ENCODE measurements at regions of chr16 and their contacts with region 1.

Region 1: DNA sequence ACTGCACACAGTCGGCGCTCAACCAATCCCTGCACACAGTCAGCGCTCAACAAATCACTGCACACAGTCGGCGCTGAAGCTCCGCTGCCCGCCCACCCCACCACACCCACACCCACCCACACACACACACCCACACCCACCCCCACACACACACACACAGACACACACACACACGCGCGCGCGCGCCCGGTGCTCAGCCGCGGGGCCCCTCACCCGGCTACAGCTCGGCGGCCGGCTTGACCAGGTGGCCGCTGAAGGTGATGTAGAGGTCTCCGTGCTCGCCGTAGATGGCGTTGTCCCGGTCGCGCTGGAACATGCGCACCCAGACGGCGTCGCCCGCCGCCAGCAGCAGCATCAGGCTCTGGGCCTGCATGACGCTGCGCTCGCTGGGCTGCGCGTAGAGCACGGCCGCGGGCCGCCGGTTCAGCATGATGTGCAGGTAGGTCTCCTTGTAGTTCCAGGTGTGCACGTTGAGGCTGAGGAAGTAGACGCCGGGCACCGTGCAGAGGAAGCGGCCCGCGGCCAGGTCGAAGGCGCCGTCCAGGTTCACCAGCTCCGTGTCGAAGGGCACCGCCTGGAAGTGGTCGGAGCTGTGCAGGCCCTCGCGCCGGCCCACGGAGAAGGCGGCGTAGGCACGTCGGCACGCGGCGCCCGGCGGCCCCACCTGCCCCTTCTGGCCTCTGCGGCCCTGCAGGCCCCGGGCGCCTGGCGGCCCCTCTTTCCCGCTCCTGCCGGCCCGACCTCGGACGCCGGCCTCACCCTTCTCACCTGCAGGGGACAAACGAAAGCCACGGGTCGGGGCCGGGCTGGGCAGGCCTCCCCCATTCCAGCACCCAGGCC is 2.5 kb downstream of the C1QTNF8 start:
- DNase-seq: no peak
- ATAC-seq: no peak
- H3K4me3 ChIP-seq: no peak overlapping the region
- H3K27ac ChIP-seq: no peak overlapping the region
- H3K4me1 ChIP-seq: peaks cover 0 to 60% (median 26%) of the 10 kb centered on the region in 12 donors
- H3K27me3 ChIP-seq: peaks cover 0 to 26% (median 3%) of the 10 kb centered on the region in 9 donors
- CTCF ChIP-seq: no peak
- POLR2A ChIP-seq: no peak

Region 2: GRCh38 chr16:1078579-1079021 is 14.9 kb before region 1 on chr16:
- intact Hi-C with region 1: loop called in 2 of 10 experiments (anchors 1 to 2 kb)
- DNase-seq: no peak
- ATAC-seq: no peak
- H3K4me3 ChIP-seq: no peak overlapping the region
- H3K27ac ChIP-seq: no peak overlapping the region
- H3K4me1 ChIP-seq: peaks cover 0 to 3% (median 0%) of the 10 kb centered on the region in 12 donors
- H3K27me3 ChIP-seq: peaks cover 20 to 88% (median 31%) of the 10 kb centered on the region in 9 donors
- CTCF ChIP-seq: no peak
- POLR2A ChIP-seq: no peak

Measured in heart left ventricle (tissue), 16 donors.